Cardiac septum (tissue), 1 donor: ENCODE measurements at regions of chr6 and their contacts with region 1.

Region 1: DNA sequence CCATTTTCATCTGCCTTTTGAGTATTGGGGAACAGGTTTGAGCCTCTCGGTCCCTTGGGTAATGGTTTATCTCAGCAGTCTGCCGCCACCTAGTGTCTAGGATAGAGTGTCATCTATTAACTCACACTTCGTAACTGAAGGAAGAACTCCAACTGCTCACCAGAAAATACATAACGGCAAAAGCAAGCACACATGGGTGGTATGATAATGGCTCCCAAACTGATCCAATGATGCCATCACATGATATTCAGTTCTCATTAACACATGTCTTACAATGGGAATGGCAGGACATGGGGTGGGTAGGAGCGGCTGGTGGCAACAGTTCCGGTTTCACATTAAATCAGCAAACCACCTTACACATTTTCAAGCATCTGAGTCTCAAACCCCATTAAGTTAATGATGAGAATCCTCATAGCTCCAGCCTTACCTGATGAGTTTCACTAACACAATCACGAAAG is 110.7 kb upstream of the PHACTR1 start:
- DNase-seq: no peak

Region 2: DNA sequence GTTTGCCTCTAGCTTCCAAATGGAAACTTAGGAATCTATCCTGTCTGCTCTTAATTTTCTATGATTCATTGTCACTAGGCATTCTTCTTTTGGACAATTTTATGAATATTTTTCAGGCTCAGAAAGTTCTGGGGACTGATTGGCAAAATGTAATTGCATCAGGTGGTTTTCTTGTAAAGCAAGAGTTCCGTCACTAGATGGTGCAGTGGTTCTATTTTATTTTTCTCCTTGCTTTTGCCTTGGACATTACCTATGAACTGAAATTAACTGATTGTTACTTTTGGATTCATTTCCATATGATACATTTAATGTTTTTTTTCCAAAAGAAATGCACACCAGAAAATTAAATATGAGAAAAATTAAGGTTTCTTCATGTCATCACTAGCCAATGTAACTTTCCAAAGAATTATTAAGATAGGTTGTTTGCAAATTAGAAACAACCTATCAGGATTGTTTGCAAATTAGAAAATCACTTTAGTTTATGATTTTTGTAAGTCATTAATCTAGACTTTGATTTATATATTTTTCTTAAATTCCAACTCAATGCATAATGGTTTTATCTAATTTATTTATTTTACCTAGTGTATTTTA is 1020.4 kb before region 1 on chr6:
- intact Hi-C with region 1: loop called (anchors 5 kb)
- DNase-seq: no peak

Region 3: DNA sequence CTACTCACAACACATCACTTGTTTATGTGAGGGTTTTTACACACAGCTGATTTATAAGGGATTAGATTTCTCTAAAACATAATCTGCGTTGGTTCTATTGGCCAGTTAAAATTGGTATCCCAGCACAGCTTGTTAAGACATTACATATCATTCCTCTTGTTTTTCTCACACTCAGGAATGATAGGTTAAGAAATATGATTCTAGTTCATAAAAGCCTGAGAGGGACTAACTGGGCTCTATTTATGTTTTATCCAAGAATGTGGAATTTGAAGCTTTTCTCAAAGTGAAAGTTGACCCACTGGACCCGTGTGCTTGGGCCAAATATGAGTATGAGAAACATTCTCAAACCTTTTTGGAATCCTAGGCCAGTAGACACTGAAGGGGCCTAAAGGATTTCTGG is 951.0 kb before region 1 on chr6:
- intact Hi-C with region 1: loop called (anchors 5 kb)
- DNase-seq: no peak

Region 4: GRCh38 chr6:12150812-12151432 is 455.0 kb before region 1 on chr6:
- intact Hi-C with region 1: loop called (anchors 10 kb)
- DNase-seq: no peak

Region 5: GRCh38 chr6:12289933-12290820 is 315.7 kb before region 1 on chr6 and contains the start of gene EDN1:
- intact Hi-C with region 1: loop called (anchors 2 kb)
- DNase-seq: peak; percentile 90
- total RNA-seq, gene EDN1: 5.9 TPM

Region 6: DNA sequence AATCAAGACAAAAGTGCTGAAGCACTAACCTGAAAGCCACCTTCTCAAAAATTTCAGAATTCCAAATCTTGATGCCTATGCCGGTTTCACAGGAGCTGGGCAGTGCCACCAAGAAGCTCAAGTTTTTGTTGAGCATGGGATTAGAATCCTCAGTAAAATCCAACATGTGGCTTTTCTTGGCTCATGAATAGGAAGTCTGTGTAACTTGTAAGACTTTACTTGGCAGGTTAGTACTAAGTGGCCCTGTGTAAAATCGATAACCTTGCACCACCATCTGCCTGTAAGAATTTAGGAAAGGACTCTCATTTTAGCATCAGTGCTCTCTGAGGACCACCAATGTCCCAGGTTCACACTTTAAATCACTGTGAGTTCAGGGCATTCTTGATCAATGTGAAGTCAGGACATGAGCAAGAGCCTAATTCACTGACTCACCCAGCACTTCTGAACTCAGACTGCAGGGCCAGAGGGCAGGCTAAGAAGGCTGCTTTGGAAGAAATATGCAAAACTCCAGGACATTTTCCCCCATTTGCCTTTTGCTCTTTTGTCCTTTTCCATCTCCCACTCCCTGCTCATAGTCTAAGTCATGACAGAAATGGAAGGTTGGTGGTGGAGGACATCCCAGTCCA is 202.6 kb before region 1 on chr6:
- intact Hi-C with region 1: loop called (anchors 10 kb)
- DNase-seq: no peak

Region 7: GRCh38 chr6:12592634-12593033 is 13.3 kb before region 1 on chr6:
- intact Hi-C with region 1: no loop called
- DNase-seq: no peak

Region 8: GRCh38 chr6:12636336-12636735 is 30.4 kb after region 1 on chr6:
- intact Hi-C with region 1: no loop called
- DNase-seq: no peak

Region 9: GRCh38 chr6:12656906-12657305 is 51.0 kb after region 1 on chr6:
- intact Hi-C with region 1: no loop called
- DNase-seq: no peak